A673 (cell line): ENCODE measurements at regions of chrX and their contacts with region 1.

Region 1: DNA sequence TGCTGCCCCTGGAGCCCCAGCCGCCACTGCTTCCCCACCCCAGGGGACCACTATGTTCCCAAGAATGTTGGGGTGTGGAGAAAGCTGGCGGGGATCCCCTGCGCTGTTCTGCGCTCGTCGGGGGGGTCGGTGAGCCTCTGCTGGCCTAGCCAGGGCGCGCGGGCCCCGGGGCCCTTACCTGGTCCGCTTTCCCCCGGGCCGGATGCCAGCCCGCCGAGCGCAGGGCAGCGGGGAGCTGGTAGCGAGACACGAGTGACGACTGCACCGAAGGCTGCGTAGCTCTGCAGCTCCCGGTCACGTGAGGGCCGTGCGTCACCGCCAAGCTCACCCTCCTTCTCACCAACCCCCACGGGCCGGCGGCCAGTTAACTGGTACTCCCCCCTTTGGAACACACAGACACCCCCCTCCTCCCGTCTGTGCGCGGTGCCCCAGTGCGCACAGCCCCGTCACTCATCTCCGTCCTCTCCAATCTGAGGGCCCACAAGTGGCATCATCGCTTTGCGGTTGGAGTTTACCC is at the start of gene BEX1:
- DNase-seq: peak; percentile 75
- H3K4me3 ChIP-seq: peak within 1 kb of the TSS; percentile 55
- H3K27ac ChIP-seq: no peak within 1 kb of the TSS
- H3K4me1 ChIP-seq: no peaks in the 10 kb centered on the region
- H3K27me3 ChIP-seq: no peaks in the 10 kb centered on the region
- CTCF ChIP-seq: no peak
- total RNA-seq, gene BEX1: 104 and 105 TPM in 2 replicates

Region 2: DNA sequence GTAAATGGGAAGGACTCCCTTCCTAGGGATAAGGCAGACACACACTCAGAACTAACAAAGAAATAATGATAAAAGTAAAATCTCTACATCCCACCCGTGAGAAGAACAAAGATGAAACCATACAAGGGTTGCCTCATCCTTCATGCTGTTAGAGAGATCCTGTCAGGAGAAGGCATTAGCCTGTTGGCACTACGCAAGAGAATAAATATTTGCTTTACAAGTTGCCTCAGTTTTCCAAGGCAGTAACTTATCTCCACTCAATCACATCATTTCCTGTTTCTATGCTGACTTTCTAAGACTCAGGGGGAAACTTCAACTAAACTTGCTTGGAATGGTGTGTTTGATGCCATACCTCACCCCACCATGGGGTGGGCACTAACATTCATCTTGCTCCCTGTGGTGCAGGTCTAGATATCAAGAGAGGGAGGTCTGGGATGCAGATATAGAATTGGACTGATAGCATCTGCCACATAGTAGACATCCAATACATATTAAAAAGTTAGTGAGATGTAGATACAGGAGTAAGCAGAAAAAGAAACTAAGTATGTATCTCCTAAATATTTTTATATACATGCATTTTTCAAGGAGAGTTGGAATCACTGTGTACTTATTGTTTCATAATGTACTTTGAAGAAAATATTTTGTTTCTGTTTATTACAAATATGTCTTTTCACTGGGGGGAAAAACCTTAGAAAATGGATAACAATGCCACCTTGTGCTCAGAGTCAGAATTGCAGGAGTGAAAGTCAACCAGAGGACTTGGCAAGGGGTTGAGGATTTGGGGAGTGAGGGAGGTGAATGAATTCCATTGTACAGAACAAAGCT is 93.7 kb after region 1 on chrX:
- CTCF ChIA-PET with region 1: no interaction called
- POLR2A ChIA-PET with region 1: no interaction called
- intact Hi-C with region 1: loop called (anchors 5 kb)
- DNase-seq: peak; percentile 74
- H3K4me3 ChIP-seq: no peak overlapping the region
- H3K27ac ChIP-seq: peak overlapping the region; percentile 55
- H3K4me1 ChIP-seq: peaks cover 9% of the 10 kb centered on the region
- H3K27me3 ChIP-seq: no peaks in the 10 kb centered on the region
- CTCF ChIP-seq: peak; percentile 83